OCI-LY7 (cell line): ENCODE measurements at regions of chr10 and their contacts with region 1.

Region 1: GRCh38 chr10:11678074-11678793 is 63.9 kb upstream of the ECHDC3 start:
- DNase-seq: peak; percentile 96
- H3K4me3 ChIP-seq: peak overlapping the region; percentile 41
- H3K27ac ChIP-seq: peak overlapping the region; percentile 100
- H3K4me1 ChIP-seq: peaks cover 94% of the 10 kb centered on the region
- CTCF ChIP-seq: no peak

Region 2: DNA sequence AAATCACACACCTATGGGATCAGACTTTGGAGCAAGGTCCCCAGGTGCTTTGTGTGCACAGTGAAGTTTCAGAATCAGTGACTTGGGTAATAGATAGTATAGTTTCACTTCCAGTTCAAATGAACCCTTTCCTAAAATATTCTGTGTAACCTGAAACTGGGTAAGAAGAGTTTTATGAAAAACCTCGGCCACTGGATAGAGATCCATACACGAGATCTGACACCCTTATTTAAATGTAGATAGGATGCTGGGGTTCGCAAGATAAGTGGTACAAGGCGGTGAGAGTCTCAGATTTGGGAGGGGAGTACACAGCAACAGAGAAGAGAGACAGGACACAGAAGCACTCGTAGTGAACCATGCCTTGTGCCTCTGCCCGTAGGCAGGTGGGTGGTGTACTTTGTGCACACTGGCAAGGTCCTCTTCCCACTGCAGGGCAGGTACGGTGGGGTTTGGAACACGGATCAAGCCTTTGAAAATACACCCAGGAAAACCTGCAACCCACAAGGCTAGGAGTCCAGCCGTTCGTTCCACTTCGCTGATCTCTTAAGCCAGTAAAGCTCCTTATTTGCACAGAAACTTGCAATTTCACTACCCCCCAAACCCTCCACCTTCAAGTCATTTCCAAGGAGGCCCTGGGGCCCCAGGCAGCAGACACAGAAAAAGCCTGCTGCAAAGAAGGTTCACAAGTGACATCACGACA is 229.5 kb before region 1 on chr10:
- CTCF ChIA-PET with region 1: no interaction called
- POLR2A ChIA-PET with region 1: no interaction called
- intact Hi-C with region 1: loop called (anchors 5 kb)
- DNase-seq: peak; percentile 76
- H3K4me3 ChIP-seq: peak overlapping the region; percentile 60
- H3K27ac ChIP-seq: peak overlapping the region; percentile 89
- H3K4me1 ChIP-seq: peaks cover 53% of the 10 kb centered on the region
- CTCF ChIP-seq: no peak

Region 3: DNA sequence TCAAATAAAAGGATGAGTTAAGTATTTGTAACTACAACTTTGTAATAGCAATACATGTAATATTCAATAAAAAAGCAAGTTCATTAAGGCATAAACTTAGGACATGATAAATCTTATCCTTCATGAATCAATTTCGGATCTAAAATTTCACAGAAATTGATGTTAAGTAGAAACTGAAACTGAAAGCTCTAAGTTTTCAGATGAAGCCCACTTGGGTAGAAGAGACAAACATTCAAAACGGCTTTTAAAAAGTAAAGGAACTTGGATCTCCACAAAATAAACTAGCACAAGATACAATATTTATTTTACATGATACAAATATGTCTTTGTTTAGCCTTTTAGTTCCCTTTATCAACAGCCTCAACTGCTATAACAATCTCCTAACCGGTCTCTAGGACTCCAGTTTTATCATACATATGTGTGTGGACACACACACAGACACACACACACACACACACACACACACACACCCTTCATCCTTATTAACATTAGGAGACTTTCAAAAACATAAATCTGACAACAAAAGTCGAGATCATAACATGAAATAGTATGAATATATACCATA is 150.5 kb before region 1 on chr10:
- CTCF ChIA-PET with region 1: no interaction called
- POLR2A ChIA-PET with region 1: interaction called, 14 read pairs
- intact Hi-C with region 1: loop called (anchors 1 kb)
- DNase-seq: peak; percentile 23
- H3K4me3 ChIP-seq: peak overlapping the region; percentile 44
- H3K27ac ChIP-seq: peak overlapping the region; percentile 52
- H3K4me1 ChIP-seq: peaks cover 60% of the 10 kb centered on the region
- CTCF ChIP-seq: no peak

Region 4: GRCh38 chr10:11631890-11632587 is 46.2 kb before region 1 on chr10:
- CTCF ChIA-PET with region 1: no interaction called
- POLR2A ChIA-PET with region 1: interaction called, 13 read pairs
- intact Hi-C with region 1: loop called (anchors 2 kb)
- DNase-seq: peak; percentile 81
- H3K4me3 ChIP-seq: peak overlapping the region; percentile 49
- H3K27ac ChIP-seq: peak overlapping the region; percentile 75
- H3K4me1 ChIP-seq: peaks cover 43% of the 10 kb centered on the region
- CTCF ChIP-seq: no peak; the same call in 1 of the 2 replicates

Region 5: GRCh38 chr10:11658812-11659368 is 19.3 kb before region 1 on chr10:
- CTCF ChIA-PET with region 1: no interaction called
- POLR2A ChIA-PET with region 1: interaction called, 31 read pairs
- intact Hi-C with region 1: no loop called
- DNase-seq: no peak
- H3K4me3 ChIP-seq: no peak overlapping the region
- H3K27ac ChIP-seq: no peak overlapping the region
- H3K4me1 ChIP-seq: peaks cover 68% of the 10 kb centered on the region
- CTCF ChIP-seq: no peak

Region 6: GRCh38 chr10:11663763-11664555 is 14.3 kb before region 1 on chr10:
- CTCF ChIA-PET with region 1: no interaction called
- POLR2A ChIA-PET with region 1: interaction called, 109 read pairs
- intact Hi-C with region 1: no loop called
- DNase-seq: peak; percentile 72
- H3K4me3 ChIP-seq: peak overlapping the region; percentile 53
- H3K27ac ChIP-seq: peak overlapping the region; percentile 96
- H3K4me1 ChIP-seq: peaks cover 83% of the 10 kb centered on the region
- CTCF ChIP-seq: no peak

Region 7: GRCh38 chr10:11782793-11783557 is 104.7 kb after region 1 on chr10:
- CTCF ChIA-PET with region 1: no interaction called
- POLR2A ChIA-PET with region 1: no interaction called
- intact Hi-C with region 1: no loop called
- DNase-seq: peak; percentile 75
- H3K4me3 ChIP-seq: no peak overlapping the region
- H3K27ac ChIP-seq: no peak overlapping the region
- H3K4me1 ChIP-seq: no peaks in the 10 kb centered on the region
- CTCF ChIP-seq: peak; percentile 91